SK-N-SH (cell line): ENCODE measurements at regions of chr5 and their contacts with region 1.

Region 1: DNA sequence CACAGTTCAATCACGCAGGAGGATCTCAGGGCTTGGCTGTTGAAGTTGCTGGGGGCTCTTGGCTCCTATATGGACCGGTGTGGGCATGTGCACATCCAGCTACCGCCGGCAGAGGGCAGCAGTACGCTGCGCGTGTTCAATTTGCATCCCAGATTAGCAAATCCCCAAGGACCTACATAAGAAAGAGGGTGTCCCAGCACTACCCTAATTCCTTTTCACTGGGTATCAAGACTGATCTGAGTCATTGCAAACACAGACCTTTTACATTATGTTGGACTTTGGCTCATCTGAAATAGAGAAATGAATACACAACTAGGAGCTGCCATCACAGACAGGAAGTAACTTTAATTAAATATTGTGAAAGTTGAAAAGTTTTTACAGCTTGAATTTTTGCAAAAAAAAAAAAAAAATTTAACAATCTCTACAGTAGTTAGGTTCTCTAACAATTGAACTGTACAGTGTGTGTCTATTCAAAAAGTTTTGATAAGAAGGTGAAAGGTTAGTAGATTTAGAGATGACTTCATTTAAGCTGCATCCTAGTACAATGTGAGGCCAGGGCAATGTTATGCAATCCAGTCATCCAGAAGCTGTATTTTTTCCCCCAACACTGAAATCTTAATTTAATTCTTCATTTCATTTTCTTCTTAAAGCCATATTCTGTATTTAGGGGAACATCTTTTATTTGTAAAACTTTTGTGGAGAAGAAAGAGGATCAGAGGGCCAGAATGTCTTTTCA is 404.0 kb downstream of the EBF1 start:
- DNase-seq: peak; percentile 72
- H3K4me3 ChIP-seq: peak overlapping the region in 1 of 2 experiments; percentile 35; a peak in 1 of 4 replicates
- H3K27ac ChIP-seq: no peak overlapping the region
- H3K4me1 ChIP-seq: peaks cover 1 to 3% of the 10 kb centered on the region in 2 experiments
- H3K27me3 ChIP-seq: no peaks in the 10 kb centered on the region
- CTCF ChIP-seq: peak; percentile 99
- EP300 ChIP-seq: no peak
- RAD21 ChIP-seq: peak; percentile 94

Region 2: DNA sequence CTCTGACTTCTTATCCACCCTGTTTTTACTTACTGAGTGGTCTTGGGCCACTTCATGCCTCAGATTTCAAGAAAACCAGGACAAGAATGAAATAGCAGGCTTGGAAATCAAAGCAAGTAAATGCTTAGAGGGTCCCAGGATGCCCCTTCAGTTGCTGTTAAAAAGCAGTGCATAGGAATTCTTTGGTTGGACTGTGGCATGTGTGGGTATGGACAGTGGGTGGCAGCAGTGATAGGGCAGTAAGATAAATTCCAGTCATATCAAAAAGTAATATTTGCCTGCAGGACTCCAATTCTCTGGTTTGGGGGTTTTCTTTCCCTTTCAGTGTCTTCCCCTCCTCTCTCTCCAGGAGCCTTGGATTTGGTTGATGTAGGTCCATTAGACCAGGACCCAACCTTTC is 530.1 kb before region 1 on chr5:
- CTCF ChIA-PET with region 1: interaction called, 35 read pairs
- POLR2A ChIA-PET with region 1: no interaction called
- DNase-seq: no peak
- H3K4me3 ChIP-seq: no peak overlapping the region
- H3K27ac ChIP-seq: no peak overlapping the region
- H3K4me1 ChIP-seq: peaks cover 0 to 17% of the 10 kb centered on the region in 2 experiments; a peak in 2 of 4 replicates
- H3K27me3 ChIP-seq: no peaks in the 10 kb centered on the region
- CTCF ChIP-seq: 0 out of 2 replicates have a peak, but pooled peaks have one; percentile 10
- EP300 ChIP-seq: no peak
- RAD21 ChIP-seq: peak; percentile 20; the same call in 1 of the 2 replicates

Region 3: GRCh38 chr5:158640593-158640980 is 55.2 kb before region 1 on chr5:
- CTCF ChIA-PET with region 1: no interaction called
- POLR2A ChIA-PET with region 1: no interaction called
- DNase-seq: no peak
- H3K4me3 ChIP-seq: no peak overlapping the region
- H3K27ac ChIP-seq: no peak overlapping the region
- H3K4me1 ChIP-seq: no peaks in the 10 kb centered on the region; a peak in 1 of 4 replicates
- H3K27me3 ChIP-seq: no peaks in the 10 kb centered on the region
- CTCF ChIP-seq: no peak
- EP300 ChIP-seq: no peak
- RAD21 ChIP-seq: no peak

Region 4: DNA sequence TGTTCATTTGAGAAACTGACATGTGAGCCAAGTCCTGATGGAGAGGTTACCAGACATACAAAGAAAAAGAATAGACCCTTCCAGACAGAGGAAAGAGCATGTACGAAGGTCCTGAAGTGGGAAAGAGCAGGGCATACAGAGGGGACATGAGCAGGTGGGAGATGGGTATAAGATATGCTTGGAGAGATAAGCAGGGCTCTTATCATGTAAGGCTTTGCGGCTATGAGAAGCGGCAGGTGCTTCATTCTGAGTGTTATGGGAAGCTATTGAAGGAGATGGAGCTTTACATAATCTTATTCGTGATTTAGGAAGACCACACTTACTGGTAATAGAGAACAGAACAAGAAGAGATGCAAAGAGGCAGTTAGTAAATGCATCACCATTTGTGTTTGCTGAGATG is 13.1 kb before region 1 on chr5:
- CTCF ChIA-PET with region 1: interaction called, 19 read pairs
- POLR2A ChIA-PET with region 1: no interaction called
- DNase-seq: no peak
- H3K4me3 ChIP-seq: no peak overlapping the region
- H3K27ac ChIP-seq: no peak overlapping the region
- H3K4me1 ChIP-seq: no peaks in the 10 kb centered on the region; a peak in 1 of 4 replicates
- H3K27me3 ChIP-seq: no peaks in the 10 kb centered on the region; the same call in 1 of the 2 replicates
- CTCF ChIP-seq: no peak
- EP300 ChIP-seq: no peak
- RAD21 ChIP-seq: no peak

Region 5: GRCh38 chr5:158739951-158740757 is 44.4 kb after region 1 on chr5:
- CTCF ChIA-PET with region 1: interaction called, 13 read pairs
- POLR2A ChIA-PET with region 1: no interaction called
- DNase-seq: no peak
- H3K4me3 ChIP-seq: no peak overlapping the region
- H3K27ac ChIP-seq: no peak overlapping the region; a peak in 1 of 4 replicates
- H3K4me1 ChIP-seq: peaks cover 0 to 3% of the 10 kb centered on the region in 2 experiments; a peak in 1 of 4 replicates
- H3K27me3 ChIP-seq: no peaks in the 10 kb centered on the region
- CTCF ChIP-seq: peak; percentile 18; the same call in 1 of the 2 replicates
- EP300 ChIP-seq: no peak
- RAD21 ChIP-seq: peak; percentile 46; the same call in 1 of the 2 replicates

Region 6: DNA sequence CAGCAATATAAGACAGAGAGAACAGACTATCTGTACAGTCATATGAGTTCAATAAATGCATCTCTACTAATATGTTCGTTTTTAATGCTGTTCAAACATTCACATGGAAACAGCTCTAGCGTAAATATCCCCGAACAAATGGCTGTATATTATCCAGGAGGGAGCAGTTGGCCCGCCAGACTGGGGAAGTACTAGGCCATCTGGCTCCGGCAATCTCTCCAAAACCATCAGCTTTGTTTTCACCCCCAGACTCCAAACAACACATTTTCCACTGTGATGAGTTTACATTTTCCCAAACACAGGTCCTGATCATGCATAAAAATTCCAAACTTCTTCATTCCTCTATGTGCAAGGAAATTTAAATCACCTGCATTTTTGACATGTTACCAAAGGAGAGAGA is 395.3 kb after region 1 on chr5:
- CTCF ChIA-PET with region 1: interaction called, 19 read pairs
- POLR2A ChIA-PET with region 1: no interaction called
- DNase-seq: no peak
- H3K4me3 ChIP-seq: no peak overlapping the region
- H3K27ac ChIP-seq: no peak overlapping the region
- H3K4me1 ChIP-seq: peaks cover 0 to 4% of the 10 kb centered on the region in 2 experiments; a peak in 2 of 4 replicates
- H3K27me3 ChIP-seq: no peaks in the 10 kb centered on the region
- CTCF ChIP-seq: no peak
- EP300 ChIP-seq: no peak
- RAD21 ChIP-seq: no peak

Region 7: DNA sequence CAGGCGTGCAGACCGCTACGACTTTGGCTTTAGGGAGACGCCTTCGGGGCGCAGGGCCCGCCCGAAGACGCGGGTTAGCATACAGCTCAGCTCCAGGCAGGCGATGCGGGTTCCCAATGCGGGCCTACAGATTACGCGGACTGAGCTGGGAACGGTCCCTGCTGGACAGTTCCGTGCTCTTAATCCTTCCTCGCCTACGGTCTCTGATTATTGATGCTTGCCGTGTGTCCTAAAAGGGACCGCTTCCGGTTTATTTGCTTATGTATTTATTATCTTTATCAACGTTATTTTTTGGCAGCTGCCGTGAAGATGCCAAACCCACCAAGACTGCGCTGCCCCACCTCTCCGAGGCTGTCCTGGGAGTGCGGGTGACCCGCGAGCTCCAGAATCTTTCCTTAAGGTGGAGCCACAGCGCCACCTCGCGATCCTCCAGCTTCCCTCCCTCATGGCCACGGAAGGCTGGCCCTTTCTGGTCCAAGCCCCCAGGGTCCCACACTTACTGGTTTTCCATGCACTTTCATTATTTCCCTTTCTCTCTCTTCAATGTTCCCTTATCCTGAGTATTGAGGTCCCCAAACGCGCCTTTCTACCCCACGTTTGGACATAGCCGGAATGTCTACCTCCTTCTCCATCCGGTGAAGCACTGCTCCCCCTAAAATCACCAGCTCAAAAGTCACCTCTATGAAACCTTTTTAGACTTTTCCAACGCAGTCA is 411.0 kb after region 1 on chr5:
- CTCF ChIA-PET with region 1: interaction called, 178 read pairs
- POLR2A ChIA-PET with region 1: no interaction called
- DNase-seq: peak; percentile 91
- H3K4me3 ChIP-seq: peak overlapping the region; percentile 28 to 63; a peak in 2 of 4 replicates
- H3K27ac ChIP-seq: no peak overlapping the region
- H3K4me1 ChIP-seq: no peaks in the 10 kb centered on the region; a peak in 1 of 4 replicates
- H3K27me3 ChIP-seq: peaks cover 10% of the 10 kb centered on the region; the same call in 1 of the 2 replicates
- CTCF ChIP-seq: peak; percentile 97
- EP300 ChIP-seq: no peak
- RAD21 ChIP-seq: peak; percentile 96

Region 8: GRCh38 chr5:159133041-159133741 is 437.4 kb after region 1 on chr5:
- CTCF ChIA-PET with region 1: interaction called, 17 read pairs
- POLR2A ChIA-PET with region 1: no interaction called
- DNase-seq: peak; percentile 32
- H3K4me3 ChIP-seq: no peak overlapping the region; a peak in 1 of 4 replicates
- H3K27ac ChIP-seq: no peak overlapping the region
- H3K4me1 ChIP-seq: no peaks in the 10 kb centered on the region; a peak in 2 of 4 replicates
- H3K27me3 ChIP-seq: no peaks in the 10 kb centered on the region; the same call in 1 of the 2 replicates
- CTCF ChIP-seq: peak; percentile 84
- EP300 ChIP-seq: no peak
- RAD21 ChIP-seq: peak; percentile 89